Activated CD4-positive, alpha-beta memory T cell treated with anti-CD3 and anti-CD28 coated beads, Interleukin-2, amount 10 ng/mL, durations not matched to agents 7 days and 5 days (primary cell): ENCODE measurements at regions of chr5 and their contacts with region 1.

Region 1: GRCh38 chr5:39209924-39210323 is 9.4 kb downstream of the FYB1 start:
- DNase-seq: peak; percentile 90
- H3K4me3 Mint-ChIP-seq: peak overlapping the region; percentile 72
- H3K27ac Mint-ChIP-seq: peak overlapping the region; percentile 96
- H3K4me1 Mint-ChIP-seq: peaks cover 91% of the 10 kb centered on the region
- H3K27me3 Mint-ChIP-seq: no peaks in the 10 kb centered on the region

Region 2: DNA sequence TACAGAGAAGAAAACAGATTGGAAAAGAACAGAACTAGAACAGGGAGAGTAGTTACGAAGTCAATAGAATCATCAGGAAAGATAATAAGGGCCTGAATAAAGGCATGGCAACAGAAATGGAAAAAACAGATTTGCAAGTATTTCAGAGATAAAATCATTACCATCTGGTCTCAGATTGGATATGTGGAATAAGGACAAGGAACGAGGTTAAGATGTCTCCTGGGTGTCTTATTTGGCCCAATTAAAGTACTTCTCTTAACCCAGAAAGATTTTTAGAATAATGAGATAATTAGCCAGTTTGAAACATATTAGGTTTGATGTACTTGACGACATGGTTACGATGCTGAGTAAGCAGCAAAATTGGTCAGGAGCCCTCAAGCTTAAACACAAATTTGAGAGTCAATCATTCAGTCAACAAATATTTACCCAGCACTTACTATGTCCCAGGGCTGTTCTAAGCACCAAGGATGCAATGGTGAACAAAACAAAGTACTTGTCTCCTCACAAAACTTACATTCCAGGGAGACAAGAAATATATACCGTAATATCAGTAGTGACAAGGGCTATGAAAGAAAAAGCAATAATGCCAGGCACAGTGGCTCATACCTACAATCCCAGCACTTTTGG is 154.0 kb before region 1 on chr5:
- CTCF ChIA-PET with region 1: no interaction called
- POLR2A ChIA-PET with region 1: no interaction called
- DNase-seq: no peak
- H3K4me3 Mint-ChIP-seq: no peak overlapping the region
- H3K27ac Mint-ChIP-seq: no peak overlapping the region
- H3K4me1 Mint-ChIP-seq: peaks cover 26% of the 10 kb centered on the region
- H3K27me3 Mint-ChIP-seq: no peaks in the 10 kb centered on the region

Region 3: DNA sequence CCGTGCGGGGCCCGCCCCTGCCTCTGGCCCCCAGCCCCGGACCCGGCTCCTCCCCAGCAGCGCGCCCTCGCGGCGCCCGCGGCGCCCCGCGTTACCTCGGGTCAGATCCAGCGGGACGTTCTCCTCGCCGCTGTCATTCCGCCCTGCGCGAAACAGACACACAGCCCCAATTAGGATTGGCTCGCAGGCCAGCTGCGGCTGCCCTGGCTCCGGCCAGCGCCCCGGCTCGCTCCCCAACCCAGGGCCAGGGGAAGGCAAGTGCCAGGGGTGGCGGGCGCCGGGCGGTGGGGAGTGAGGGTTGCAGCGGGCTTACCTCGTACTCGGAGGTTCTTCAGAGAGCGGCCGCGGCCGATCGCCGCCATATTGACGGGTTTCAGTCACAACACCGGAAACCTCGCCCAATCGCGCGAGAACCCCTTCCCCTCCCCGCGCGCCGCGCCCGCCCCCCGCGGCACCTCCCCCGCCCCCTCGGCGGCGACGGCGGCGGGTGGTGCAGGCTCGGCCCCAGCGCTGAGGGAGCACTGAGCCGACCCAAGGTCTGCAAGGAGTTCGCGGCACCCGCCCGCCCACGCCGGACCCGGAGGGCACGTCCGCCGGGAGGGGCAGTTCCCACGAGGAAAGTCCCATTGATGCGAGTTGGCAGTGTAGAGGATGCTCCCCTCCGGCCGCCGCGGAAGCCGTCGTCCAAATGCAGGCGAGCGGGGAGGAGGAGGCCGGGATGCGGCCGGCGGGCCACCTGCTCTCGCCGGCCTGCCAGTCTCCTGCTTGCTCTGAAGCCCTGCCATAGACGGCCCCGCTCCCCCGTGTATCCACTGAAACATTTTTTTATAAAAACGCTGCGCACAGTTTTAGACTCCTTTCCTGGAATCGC is 135.7 kb before region 1 on chr5 and contains the start of gene RICTOR:
- CTCF ChIA-PET with region 1: interaction called, 4 read pairs
- POLR2A ChIA-PET with region 1: interaction called, 31 read pairs
- DNase-seq: peak; percentile 93
- H3K4me3 Mint-ChIP-seq: peak within 1 kb of the TSS; percentile 91
- H3K27ac Mint-ChIP-seq: peak within 1 kb of the TSS; percentile 95
- H3K4me1 Mint-ChIP-seq: peaks cover 54% of the 10 kb centered on the region
- H3K27me3 Mint-ChIP-seq: peaks cover 14% of the 10 kb centered on the region
- total RNA-seq, gene RICTOR: 50.4 to 56.4 TPM

Region 4: GRCh38 chr5:39106322-39106721 is 103.6 kb before region 1 on chr5:
- CTCF ChIA-PET with region 1: no interaction called
- POLR2A ChIA-PET with region 1: no interaction called
- DNase-seq: no peak
- H3K4me3 Mint-ChIP-seq: no peak overlapping the region
- H3K27ac Mint-ChIP-seq: no peak overlapping the region
- H3K4me1 Mint-ChIP-seq: peaks cover 8% of the 10 kb centered on the region
- H3K27me3 Mint-ChIP-seq: no peaks in the 10 kb centered on the region

Region 5: GRCh38 chr5:39119404-39120051 is 90.4 kb before region 1 on chr5:
- CTCF ChIA-PET with region 1: no interaction called
- POLR2A ChIA-PET with region 1: no interaction called
- DNase-seq: no peak
- H3K4me3 Mint-ChIP-seq: no peak overlapping the region
- H3K27ac Mint-ChIP-seq: no peak overlapping the region
- H3K4me1 Mint-ChIP-seq: peaks cover 27% of the 10 kb centered on the region
- H3K27me3 Mint-ChIP-seq: no peaks in the 10 kb centered on the region

Region 6: DNA sequence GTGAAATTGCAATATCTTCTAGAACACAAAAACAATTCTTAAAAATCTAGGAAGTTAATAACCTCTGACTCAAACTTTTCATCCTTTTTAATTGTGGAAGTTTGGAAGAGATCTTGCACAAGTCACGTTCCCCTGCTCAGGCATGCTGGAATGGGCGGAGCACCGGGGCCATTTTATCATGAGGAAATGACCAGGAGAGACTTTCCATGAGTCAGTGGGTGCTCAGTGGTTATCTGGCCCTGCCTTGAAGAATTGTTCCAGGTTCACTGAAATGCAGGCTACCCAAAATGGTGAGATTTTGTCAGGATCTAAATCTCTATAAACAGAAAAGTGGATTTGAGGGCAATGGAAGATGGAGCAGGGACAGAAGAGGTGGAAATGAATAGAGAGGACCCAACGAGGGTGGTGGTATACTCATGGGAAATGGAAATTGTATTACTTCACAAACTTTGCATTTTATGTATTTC is 51.8 kb before region 1 on chr5:
- CTCF ChIA-PET with region 1: interaction called, 3 read pairs
- POLR2A ChIA-PET with region 1: interaction called, 36 read pairs
- DNase-seq: no peak
- H3K4me3 Mint-ChIP-seq: peak overlapping the region; percentile 37
- H3K27ac Mint-ChIP-seq: peak overlapping the region; percentile 38
- H3K4me1 Mint-ChIP-seq: peaks cover 81% of the 10 kb centered on the region
- H3K27me3 Mint-ChIP-seq: no peaks in the 10 kb centered on the region

Region 7: GRCh38 chr5:39177631-39177964 is 32.3 kb before region 1 on chr5:
- CTCF ChIA-PET with region 1: interaction called, 7 read pairs
- POLR2A ChIA-PET with region 1: interaction called, 125 read pairs
- DNase-seq: no peak
- H3K4me3 Mint-ChIP-seq: peak overlapping the region; percentile 65
- H3K27ac Mint-ChIP-seq: peak overlapping the region; percentile 92
- H3K4me1 Mint-ChIP-seq: peaks cover 96% of the 10 kb centered on the region
- H3K27me3 Mint-ChIP-seq: no peaks in the 10 kb centered on the region

Region 8: DNA sequence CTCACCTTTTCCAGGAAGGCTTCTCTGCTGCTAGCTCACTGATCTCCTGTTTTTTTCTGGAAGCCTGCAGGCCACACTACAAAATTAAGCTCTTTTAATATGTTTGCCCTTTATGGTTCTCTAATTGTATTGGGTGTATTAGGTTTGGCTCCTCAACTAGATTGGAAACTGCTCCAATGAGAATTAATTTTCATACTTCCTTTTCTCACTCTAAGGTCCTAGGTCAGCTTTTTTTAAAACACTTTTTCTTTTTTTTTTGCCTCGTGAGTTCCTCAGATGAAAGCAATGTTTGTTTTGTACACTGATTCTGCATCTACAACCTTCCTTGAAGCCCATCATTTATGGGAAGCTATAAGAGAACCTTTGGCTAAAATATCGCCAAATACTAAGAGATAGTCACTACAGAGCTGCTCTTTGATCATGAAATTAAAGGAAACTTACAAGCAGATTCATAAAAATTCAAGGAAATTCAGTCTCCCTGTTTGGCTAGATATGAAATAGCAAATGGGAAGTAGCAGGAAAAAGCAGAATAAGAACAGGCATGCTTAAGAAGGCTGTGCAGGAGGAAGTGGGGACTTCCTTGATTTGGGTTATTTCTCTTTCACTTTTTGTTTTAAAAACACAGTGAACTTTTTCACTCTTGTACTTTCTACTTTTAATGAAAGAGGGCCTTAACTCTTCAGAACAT is 64.6 kb after region 1 on chr5:
- CTCF ChIA-PET with region 1: interaction called, 5 read pairs
- POLR2A ChIA-PET with region 1: interaction called, 24 read pairs
- DNase-seq: no peak
- H3K4me3 Mint-ChIP-seq: peak overlapping the region; percentile 72
- H3K27ac Mint-ChIP-seq: peak overlapping the region; percentile 89
- H3K4me1 Mint-ChIP-seq: peaks cover 47% of the 10 kb centered on the region
- H3K27me3 Mint-ChIP-seq: no peaks in the 10 kb centered on the region

Region 9: GRCh38 chr5:39555788-39556187 is 345.9 kb after region 1 on chr5:
- CTCF ChIA-PET with region 1: no interaction called
- POLR2A ChIA-PET with region 1: no interaction called
- DNase-seq: no peak
- H3K4me3 Mint-ChIP-seq: no peak overlapping the region
- H3K27ac Mint-ChIP-seq: no peak overlapping the region
- H3K4me1 Mint-ChIP-seq: no peaks in the 10 kb centered on the region
- H3K27me3 Mint-ChIP-seq: peaks cover 14% of the 10 kb centered on the region